ENCODE measurements at regions of chr7 and their contacts with region 1.

Region 1: GRCh38 chr7:50206453-50207250 is 97.9 kb upstream of the IKZF1 start:
- DNase-seq: no peak
- H3K4me3 ChIP-seq: no peak overlapping the region
- H3K27ac ChIP-seq: no peak overlapping the region
- H3K4me1 ChIP-seq: no peaks in the 10 kb centered on the region
- H3K27me3 ChIP-seq: no peaks in the 10 kb centered on the region
- CTCF ChIP-seq: no peak

Region 2: DNA sequence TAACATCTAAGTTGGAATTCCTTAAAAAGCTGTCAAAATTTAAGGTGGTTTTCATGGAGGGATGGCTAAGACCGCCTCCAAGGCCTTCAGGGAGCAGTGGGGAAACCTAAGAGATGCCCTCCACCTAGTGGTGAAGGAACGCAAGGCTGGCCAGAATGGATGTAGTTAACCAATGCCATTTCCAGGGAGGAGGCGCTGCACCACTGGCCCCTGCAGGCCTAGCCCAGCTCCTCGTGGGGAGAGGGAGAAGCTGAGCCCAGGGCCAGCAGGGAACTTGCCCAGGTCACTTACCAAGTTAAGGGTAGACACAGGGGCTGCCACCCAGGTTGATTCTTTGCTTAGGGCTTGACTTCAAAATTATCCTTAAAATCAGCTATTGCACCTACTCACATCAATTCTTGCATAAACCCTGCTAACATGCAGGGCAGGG is 211.4 kb after region 1 on chr7:
- intact Hi-C with region 1: loop called (anchors 10 kb)
- DNase-seq: peak; percentile 77
- H3K4me3 ChIP-seq: no peak overlapping the region
- H3K27ac ChIP-seq: no peak overlapping the region
- H3K4me1 ChIP-seq: no peaks in the 10 kb centered on the region
- H3K27me3 ChIP-seq: no peaks in the 10 kb centered on the region
- CTCF ChIP-seq: peak; percentile 76

Region 3: DNA sequence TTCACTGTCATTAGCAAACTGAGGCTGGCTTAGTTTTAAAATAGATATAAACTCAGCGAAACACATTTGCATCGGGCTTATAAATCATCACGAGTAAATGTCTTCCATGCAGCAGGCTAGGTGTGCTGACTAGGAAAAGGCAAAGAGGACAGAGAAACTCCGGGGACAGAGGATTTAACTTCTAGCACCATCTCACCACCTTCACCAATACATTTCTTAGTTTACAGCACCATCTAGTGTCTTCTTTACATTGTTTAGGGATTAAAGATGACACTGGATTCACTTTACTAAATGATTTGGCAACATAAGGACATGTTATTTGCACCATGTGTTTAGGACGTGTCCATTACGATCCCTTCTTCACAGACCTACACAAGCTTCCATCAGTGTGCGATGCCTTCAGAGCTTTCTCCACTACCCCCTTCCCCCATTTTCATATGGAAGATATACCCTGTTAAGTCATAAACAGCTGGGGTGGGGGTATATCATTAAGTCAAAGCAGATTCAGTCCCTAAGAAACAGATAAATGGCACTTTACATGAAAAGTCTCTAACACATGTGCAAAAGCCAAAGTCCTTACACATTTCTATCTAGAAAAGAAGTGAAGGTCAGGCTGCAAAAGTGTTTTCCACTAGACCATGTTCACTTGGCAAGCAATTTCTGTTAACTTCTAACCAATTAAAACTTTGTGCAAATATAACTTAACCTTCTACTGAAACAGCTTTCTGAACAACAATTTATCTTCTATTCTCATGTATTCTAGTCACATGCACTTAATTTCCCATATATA is 472.8 kb after region 1 on chr7:
- intact Hi-C with region 1: loop called (anchors 5 kb)
- DNase-seq: no peak
- H3K4me3 ChIP-seq: no peak overlapping the region
- H3K27ac ChIP-seq: no peak overlapping the region
- H3K4me1 ChIP-seq: no peaks in the 10 kb centered on the region
- H3K27me3 ChIP-seq: no peaks in the 10 kb centered on the region
- CTCF ChIP-seq: no peak

Region 4: DNA sequence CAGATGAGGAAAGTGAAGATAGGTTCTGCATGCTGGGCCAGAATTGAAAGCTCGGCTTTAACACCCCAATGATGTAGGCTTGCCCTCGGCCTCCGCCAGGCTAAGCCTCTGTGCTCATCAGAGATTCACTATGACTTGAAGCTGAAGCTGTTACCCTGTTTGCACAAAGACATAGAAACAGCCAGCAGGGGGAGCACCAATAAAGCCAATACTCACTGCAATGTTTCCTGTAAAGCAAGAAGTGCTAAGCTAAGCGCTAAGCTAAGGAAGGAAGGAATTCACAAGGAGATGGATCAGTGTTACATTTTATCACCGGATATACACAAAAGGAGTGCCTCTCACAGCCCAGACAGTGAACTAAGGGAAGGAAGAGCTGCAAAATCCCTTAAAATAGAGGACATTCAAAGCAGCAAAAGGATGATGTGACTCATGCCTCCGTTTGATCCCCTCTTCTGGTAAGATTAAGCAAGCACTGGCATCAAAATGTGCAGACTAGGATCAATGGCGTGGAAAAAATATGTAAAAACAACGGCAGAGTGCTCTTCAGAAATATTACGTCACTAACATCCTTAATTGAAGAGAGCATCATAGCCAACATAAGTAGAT is 956.2 kb after region 1 on chr7:
- intact Hi-C with region 1: loop called (anchors 5 kb)
- DNase-seq: peak; percentile 88
- H3K4me3 ChIP-seq: no peak overlapping the region
- H3K27ac ChIP-seq: no peak overlapping the region
- H3K4me1 ChIP-seq: no peaks in the 10 kb centered on the region
- H3K27me3 ChIP-seq: no peaks in the 10 kb centered on the region
- CTCF ChIP-seq: peak; percentile 74